ENCODE measurements at regions of chr7 and their contacts with region 1.

Region 1: DNA sequence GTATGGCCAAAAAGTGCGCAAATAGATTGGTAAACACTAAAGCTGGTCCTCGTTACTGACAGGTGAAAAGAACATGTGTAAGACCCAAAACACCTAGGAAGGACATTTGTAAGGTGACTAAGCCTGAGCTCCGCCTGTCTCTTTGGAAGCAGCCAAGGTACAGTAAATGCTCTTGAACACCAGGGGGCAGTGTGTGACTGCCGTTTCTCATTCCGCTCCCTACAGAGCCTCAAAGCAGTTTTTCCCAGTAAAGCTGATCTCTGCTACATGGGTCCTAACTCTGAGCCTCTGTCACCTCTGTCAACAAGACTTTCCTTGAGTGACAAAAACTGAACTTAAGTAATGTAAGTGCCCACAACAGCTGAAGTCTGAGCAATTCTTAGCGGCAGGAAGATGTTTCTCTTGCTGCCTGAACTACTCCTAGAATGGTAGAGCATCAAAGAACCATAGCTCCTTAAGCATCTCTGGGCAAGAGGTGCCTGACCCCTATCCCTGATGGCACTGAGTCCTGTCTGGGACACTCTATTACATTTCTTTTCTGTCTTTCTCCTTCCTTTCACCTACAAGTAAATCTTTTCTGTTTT is 238.0 kb upstream of the INHBA start:
- DNase-seq: peak; percentile 53
- H3K4me3 ChIP-seq: no peak overlapping the region
- H3K27ac ChIP-seq: no peak overlapping the region
- H3K4me1 ChIP-seq: peaks cover 12% of the 10 kb centered on the region
- H3K27me3 ChIP-seq: peaks cover 31% of the 10 kb centered on the region
- CTCF ChIP-seq: peak; percentile 95

Region 2: DNA sequence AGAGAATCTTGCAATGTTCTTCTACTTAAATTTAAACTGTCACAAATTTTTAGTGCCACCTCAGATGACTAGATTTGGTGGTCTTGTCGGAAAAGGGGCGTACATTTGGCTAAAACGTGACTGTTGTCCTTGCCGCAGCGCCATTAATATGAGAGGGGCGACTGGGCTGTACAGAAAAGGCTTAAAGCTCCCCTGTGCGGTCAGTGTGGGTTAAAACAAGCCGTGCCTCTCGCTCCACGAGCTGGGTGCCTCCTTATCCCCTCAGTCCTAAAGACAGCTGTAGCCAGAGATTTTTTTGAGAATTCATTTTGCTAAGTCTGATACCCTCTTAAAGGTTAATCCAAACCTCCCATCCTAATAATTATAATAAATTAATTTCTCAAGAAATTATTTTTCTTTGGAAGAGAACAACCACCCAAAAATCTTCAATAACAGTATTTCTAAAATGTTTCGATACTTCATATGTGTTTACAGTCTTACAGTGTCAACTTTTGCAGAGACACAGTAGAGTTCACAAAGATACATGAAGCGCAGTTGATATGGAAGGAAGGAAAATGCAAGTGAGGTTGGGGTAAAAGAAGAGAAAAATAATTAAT is 902.5 kb after region 1 on chr7:
- intact Hi-C with region 1: loop called (anchors 5 kb)
- DNase-seq: peak; percentile 20
- H3K4me3 ChIP-seq: peak overlapping the region; percentile 37
- H3K27ac ChIP-seq: no peak overlapping the region
- H3K4me1 ChIP-seq: no peaks in the 10 kb centered on the region
- H3K27me3 ChIP-seq: peaks cover 25% of the 10 kb centered on the region
- CTCF ChIP-seq: peak; percentile 66